ENCODE measurements at regions of chr10 and their contacts with region 1.

Region 1: GRCh38 chr10:108544494-108545120 is 1378.7 kb downstream of the XPNPEP1 start:
- H3K4me3 Mint-ChIP-seq: no peak overlapping the region
- H3K27ac Mint-ChIP-seq: no peak overlapping the region
- H3K4me1 Mint-ChIP-seq: peaks cover 6% of the 10 kb centered on the region
- H3K27me3 Mint-ChIP-seq: no peaks in the 10 kb centered on the region

Region 2: DNA sequence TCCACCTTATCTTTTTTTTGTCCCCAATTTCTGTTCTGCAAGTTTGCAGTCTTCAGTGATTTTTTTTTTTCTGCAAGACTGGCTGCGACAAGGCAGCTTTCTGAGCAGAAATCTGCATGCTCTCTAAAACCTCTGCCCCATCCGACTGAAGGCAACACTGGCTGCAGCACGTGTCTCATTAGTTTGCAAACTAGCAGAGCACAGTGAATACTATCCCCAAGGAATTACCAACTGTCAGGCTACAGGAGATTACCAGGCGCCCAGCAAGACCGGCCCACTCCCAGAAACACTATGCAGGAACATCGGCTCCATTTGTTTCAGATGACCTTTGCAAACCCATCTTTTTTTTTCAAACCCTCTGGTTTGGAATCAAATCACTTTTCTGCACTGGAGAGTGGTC is 1918.9 kb before region 1 on chr10:
- intact Hi-C with region 1: loop called (anchors 5 kb)
- H3K4me3 Mint-ChIP-seq: no peak overlapping the region
- H3K27ac Mint-ChIP-seq: no peak overlapping the region
- H3K4me1 Mint-ChIP-seq: no peaks in the 10 kb centered on the region
- H3K27me3 Mint-ChIP-seq: peaks cover 2% of the 10 kb centered on the region

Region 3: DNA sequence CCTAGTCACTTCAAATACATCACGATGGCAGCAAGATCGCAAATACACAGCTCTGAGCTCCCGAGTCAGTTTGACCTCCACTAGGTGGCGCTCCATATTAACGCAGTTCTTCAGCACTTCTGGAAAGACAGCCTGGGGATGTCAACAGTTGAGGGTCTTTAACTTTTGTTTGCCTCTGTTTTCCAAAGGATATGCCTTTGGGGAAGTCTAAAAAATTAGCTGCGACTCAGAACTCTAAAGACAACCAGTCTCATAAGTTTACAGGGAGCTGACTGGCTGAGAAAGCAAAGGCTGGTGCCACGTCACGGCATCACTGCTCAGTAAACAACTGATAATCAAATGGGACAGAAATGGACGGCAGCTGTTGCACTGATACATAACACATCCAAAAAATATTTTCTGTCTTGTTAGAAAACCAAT is 1838.9 kb before region 1 on chr10:
- intact Hi-C with region 1: loop called (anchors 10 kb)
- H3K4me3 Mint-ChIP-seq: no peak overlapping the region
- H3K27ac Mint-ChIP-seq: no peak overlapping the region
- H3K4me1 Mint-ChIP-seq: no peaks in the 10 kb centered on the region
- H3K27me3 Mint-ChIP-seq: peaks cover 1% of the 10 kb centered on the region

Region 4: DNA sequence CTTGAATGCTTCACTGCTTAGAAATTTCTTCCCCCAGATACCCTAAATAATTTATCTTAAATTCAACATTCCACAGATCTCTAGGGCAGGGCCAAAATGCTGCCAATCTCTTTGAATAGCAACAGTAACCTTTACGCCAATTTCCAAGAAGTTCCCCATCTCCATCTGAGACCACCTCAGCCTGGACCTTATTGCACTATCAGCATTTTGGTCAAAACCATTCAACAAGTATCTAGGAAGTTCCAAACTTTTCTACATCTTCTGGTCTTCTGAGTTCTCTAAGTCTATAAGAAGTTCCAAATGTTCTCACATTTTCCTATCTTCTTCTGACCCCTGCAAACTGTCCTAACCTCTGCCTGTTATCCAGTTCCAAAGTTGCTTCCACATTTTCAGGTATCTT is 73.2 kb before region 1 on chr10:
- intact Hi-C with region 1: no loop called
- H3K4me3 Mint-ChIP-seq: no peak overlapping the region
- H3K27ac Mint-ChIP-seq: no peak overlapping the region
- H3K4me1 Mint-ChIP-seq: no peaks in the 10 kb centered on the region
- H3K27me3 Mint-ChIP-seq: peaks cover 9% of the 10 kb centered on the region

Measured in dendritic cell treated with granulocyte-macrophage colony-stimulating factor and Interleukin-4, amounts not matched to agents 40 ng/mL and 50 ng/mL, for 4 days (primary cell).